ENCODE measurements at regions of chr1 and their contacts with region 1.

Region 1: GRCh38 chr1:78101514-78101913 is 55.7 kb downstream of the GIPC2 start:
- DNase-seq: no peak
- H3K4me3 ChIP-seq: no peak overlapping the region
- H3K27ac ChIP-seq: peak overlapping the region; percentile 71 to 97; a peak in 3 of 4 replicates
- H3K4me1 ChIP-seq: peaks cover 0 to 22% of the 10 kb centered on the region in 2 experiments; a peak in 1 of 4 replicates
- H3K27me3 ChIP-seq: no peaks in the 10 kb centered on the region
- CTCF ChIP-seq: no peak
- EP300 ChIP-seq: peak in 1 of 2 experiments; percentile 92; a peak in 2 of 4 replicates
- RAD21 ChIP-seq: no peak

Region 2: GRCh38 chr1:78114034-78114956 is 12.8 kb after region 1 on chr1:
- CTCF ChIA-PET with region 1: interaction called, 22 read pairs
- POLR2A ChIA-PET with region 1: no interaction called
- DNase-seq: peak; percentile 54
- H3K4me3 ChIP-seq: no peak overlapping the region; a peak in 1 of 4 replicates
- H3K27ac ChIP-seq: no peak overlapping the region
- H3K4me1 ChIP-seq: peaks cover 3 to 4% of the 10 kb centered on the region in 2 experiments; a peak in 1 of 4 replicates
- H3K27me3 ChIP-seq: no peaks in the 10 kb centered on the region
- CTCF ChIP-seq: peak; percentile 98
- EP300 ChIP-seq: no peak
- RAD21 ChIP-seq: peak; percentile 96

Measured in SK-N-SH (cell line).